Ovary (tissue), 10 donors: ENCODE measurements at regions of chr5 and their contacts with region 1.

Region 1: DNA sequence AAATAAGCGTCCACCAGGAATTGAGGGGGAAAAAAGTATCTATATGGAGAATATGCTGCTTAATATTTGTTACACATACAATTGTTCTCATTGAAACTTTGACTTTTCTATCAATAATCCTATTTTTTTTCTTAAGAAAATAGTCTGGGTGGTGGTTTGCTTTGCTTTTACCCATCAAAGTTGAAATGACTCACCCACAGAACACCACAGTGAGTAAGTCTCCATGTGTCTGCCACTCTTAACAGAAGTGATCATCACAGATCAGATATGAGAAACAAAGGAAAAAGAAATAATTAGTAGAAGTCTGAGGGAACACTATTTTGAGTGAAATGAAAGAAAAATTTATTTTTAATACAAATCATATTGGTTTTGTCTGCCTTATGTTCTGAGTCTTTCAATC is 742.8 kb downstream of the CDH9 start:
- DNase-seq: no peak
- H3K4me3 ChIP-seq: no peak overlapping the region
- H3K27ac ChIP-seq: no peak overlapping the region
- H3K4me1 ChIP-seq: no peaks in the 10 kb centered on the region
- H3K27me3 ChIP-seq: no peaks in the 10 kb centered on the region
- CTCF ChIP-seq: no peak
- EP300 ChIP-seq: no peak
- POLR2A ChIP-seq: no peak

Region 2: GRCh38 chr5:26482810-26483375 is 187.4 kb after region 1 on chr5:
- intact Hi-C with region 1: loop called in 1 of 4 experiments (anchors 5 kb)
- DNase-seq: no peak
- H3K4me3 ChIP-seq: no peak overlapping the region
- H3K27ac ChIP-seq: no peak overlapping the region
- H3K4me1 ChIP-seq: no peaks in the 10 kb centered on the region
- H3K27me3 ChIP-seq: no peaks in the 10 kb centered on the region
- CTCF ChIP-seq: no peak
- EP300 ChIP-seq: no peak
- POLR2A ChIP-seq: no peak